T-cell (primary cell): ENCODE measurements at regions of chrX and their contacts with region 1.

Region 1: DNA sequence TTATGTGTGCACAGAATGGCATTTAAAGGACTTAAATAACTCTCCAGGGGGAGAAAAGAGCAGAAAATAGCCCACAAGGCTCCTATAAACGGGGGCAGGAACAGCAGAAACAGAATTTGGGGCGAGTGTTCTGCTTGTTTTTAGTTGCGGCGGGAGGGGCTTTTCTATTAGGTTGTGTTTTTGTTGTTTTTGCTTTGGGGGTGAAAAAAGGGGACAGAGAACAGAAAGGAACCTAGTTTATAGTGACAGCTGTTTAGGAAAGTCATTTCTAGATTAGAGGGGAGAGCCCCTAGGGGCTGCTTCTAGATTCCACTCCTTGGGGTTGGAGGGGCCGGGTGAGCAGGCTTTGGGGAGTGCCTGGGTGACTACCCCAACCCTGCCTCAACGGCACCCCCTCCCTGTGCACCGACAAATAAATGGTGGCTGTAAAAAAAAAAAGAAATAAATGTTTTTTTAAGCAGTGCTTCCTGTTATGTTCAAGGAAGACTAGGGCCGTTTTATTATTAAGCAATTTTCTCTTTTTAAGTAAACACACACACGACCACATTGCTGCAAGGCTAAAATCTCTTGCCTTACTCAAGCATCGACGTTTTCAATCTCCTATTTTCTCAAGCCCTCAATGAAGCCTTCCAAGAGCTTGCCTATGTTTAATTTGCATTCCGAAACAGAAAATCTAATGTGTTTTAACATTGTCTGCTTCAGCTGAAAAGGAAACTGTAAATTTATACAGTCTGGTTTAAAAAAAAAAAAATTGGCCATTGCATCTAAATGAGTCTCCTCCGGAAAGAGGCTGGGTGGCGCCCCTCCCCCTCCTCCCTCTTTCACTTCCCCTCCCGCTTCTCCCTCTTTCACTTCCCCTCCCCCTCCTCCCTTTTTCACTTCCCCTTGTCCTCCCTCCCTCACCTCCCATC is 123.3 kb upstream of the TBL1X start:
- DNase-seq: peak; percentile 20 to 75 (median 51)
- ATAC-seq: peak; percentile 50 to 60 (median 59)
- H3K4me3 ChIP-seq: peak overlapping the region; percentile 38 to 52
- H3K4me3 Mint-ChIP-seq: peak overlapping the region; percentile 78 to 82 (median 79)
- H3K27ac ChIP-seq: peak overlapping the region; percentile 90
- H3K27ac Mint-ChIP-seq: peak overlapping the region; percentile 96 to 98
- H3K4me1 ChIP-seq: peaks cover 14 to 41% of the 10 kb centered on the region in 2 experiments
- H3K4me1 Mint-ChIP-seq: peaks cover 44 to 49% (median 44%) of the 10 kb centered on the region in 3 donors
- H3K27me3 ChIP-seq: no peaks in the 10 kb centered on the region
- H3K27me3 Mint-ChIP-seq: no peaks in the 10 kb centered on the region

Region 2: DNA sequence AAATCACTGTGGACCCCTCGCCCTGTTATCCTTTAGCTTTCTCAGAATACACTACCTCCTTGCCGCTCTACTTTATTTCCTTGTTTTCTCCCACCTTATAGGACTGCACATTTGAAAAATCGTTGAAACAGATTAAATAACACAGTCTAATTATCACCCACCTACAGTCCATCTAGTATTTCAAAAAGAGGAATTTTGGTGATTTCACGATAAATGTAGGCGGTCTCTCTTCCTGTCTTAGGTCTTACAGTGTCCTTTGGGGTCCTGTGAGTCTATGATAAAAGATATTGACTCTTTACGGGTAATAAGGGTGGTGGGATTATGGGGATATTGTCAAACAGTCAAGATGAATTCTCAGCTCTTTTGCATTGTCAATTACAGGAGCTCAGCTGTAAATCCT is 120.9 kb after region 1 on chrX:
- CTCF ChIA-PET with region 1: interaction called in 1 of 2 experiments, 12 read pairs
- POLR2A ChIA-PET with region 1: interaction called, 3 to 6 read pairs
- DNase-seq: no peak
- ATAC-seq: no peak
- H3K4me3 ChIP-seq: no peak overlapping the region
- H3K4me3 Mint-ChIP-seq: peak overlapping the region; percentile 28 to 74 (median 73)
- H3K27ac ChIP-seq: peak overlapping the region; percentile 57
- H3K27ac Mint-ChIP-seq: peak overlapping the region; percentile 56 to 87
- H3K4me1 ChIP-seq: peaks cover 16 to 45% of the 10 kb centered on the region in 2 experiments
- H3K4me1 Mint-ChIP-seq: peaks cover 43 to 58% (median 55%) of the 10 kb centered on the region in 3 donors
- H3K27me3 ChIP-seq: no peaks in the 10 kb centered on the region
- H3K27me3 Mint-ChIP-seq: peaks cover 0 to 6% of the 10 kb centered on the region in 2 donors

Region 3: GRCh38 chrX:9644335-9644734 is 302.8 kb after region 1 on chrX:
- CTCF ChIA-PET with region 1: no interaction called
- POLR2A ChIA-PET with region 1: interaction called in 1 of 2 experiments, 12 read pairs
- DNase-seq: peak in 33 of 35 experiments; percentile 8 to 70 (median 42)
- ATAC-seq: peak; percentile 50 to 95 (median 70)
- H3K4me3 ChIP-seq: no peak overlapping the region
- H3K4me3 Mint-ChIP-seq: peak overlapping the region in 1 of 3 donors; percentile 49
- H3K27ac ChIP-seq: no peak overlapping the region
- H3K27ac Mint-ChIP-seq: peak overlapping the region in 1 of 2 donors; percentile 62
- H3K4me1 ChIP-seq: peaks cover 2 to 20% of the 10 kb centered on the region in 2 experiments
- H3K4me1 Mint-ChIP-seq: peaks cover 29 to 31% (median 30%) of the 10 kb centered on the region in 3 donors
- H3K27me3 ChIP-seq: no peaks in the 10 kb centered on the region
- H3K27me3 Mint-ChIP-seq: no peaks in the 10 kb centered on the region

Region 4: GRCh38 chrX:10111364-10112148 is 770.0 kb after region 1 on chrX:
- CTCF ChIA-PET with region 1: no interaction called
- POLR2A ChIA-PET with region 1: interaction called in 1 of 2 experiments, 13 read pairs
- DNase-seq: peak; percentile 25 to 79 (median 62)
- ATAC-seq: peak; percentile 69 to 73 (median 72)
- H3K4me3 ChIP-seq: peak overlapping the region in 1 of 2 donors; percentile 14
- H3K4me3 Mint-ChIP-seq: peak overlapping the region; percentile 70 to 88 (median 88)
- H3K27ac ChIP-seq: peak overlapping the region; percentile 98
- H3K27ac Mint-ChIP-seq: peak overlapping the region; percentile 96 to 100
- H3K4me1 ChIP-seq: peaks cover 19 to 66% of the 10 kb centered on the region in 2 experiments
- H3K4me1 Mint-ChIP-seq: peaks cover 54 to 76% (median 60%) of the 10 kb centered on the region in 3 donors
- H3K27me3 ChIP-seq: no peaks in the 10 kb centered on the region
- H3K27me3 Mint-ChIP-seq: no peaks in the 10 kb centered on the region